ENCODE measurements at regions of chr4 and their contacts with region 1.

Region 1: GRCh38 chr4:184474263-184475095 is at the start of gene IRF2:
- DNase-seq: peak; percentile 99
- ATAC-seq: peak; percentile 80
- H3K4me3 Mint-ChIP-seq: peak within 1 kb of the TSS; percentile 98
- H3K27ac Mint-ChIP-seq: peak within 1 kb of the TSS; percentile 99
- H3K4me1 Mint-ChIP-seq: peaks cover 58% of the 10 kb centered on the region
- H3K27me3 Mint-ChIP-seq: no peaks in the 10 kb centered on the region
- total RNA-seq, gene IRF2: 81.6 to 112 TPM

Region 2: GRCh38 chr4:184417802-184418511 is 56.5 kb before region 1 on chr4:
- CTCF ChIA-PET with region 1: interaction called, 10 read pairs
- DNase-seq: peak; percentile 49
- ATAC-seq: peak; percentile 81
- H3K4me3 Mint-ChIP-seq: peak overlapping the region; percentile 75
- H3K27ac Mint-ChIP-seq: peak overlapping the region; percentile 95
- H3K4me1 Mint-ChIP-seq: peaks cover 86% of the 10 kb centered on the region
- H3K27me3 Mint-ChIP-seq: no peaks in the 10 kb centered on the region

Measured in activated CD8-positive, alpha-beta memory T cell treated with anti-CD3 and anti-CD28 coated beads, Interleukin-2, amount 10 ng/mL, durations not matched to agents 7 days and 5 days (primary cell).